Sciatic nerve (tissue), 2 donors: ENCODE measurements at regions of chr6 and their contacts with region 1.

Region 1: DNA sequence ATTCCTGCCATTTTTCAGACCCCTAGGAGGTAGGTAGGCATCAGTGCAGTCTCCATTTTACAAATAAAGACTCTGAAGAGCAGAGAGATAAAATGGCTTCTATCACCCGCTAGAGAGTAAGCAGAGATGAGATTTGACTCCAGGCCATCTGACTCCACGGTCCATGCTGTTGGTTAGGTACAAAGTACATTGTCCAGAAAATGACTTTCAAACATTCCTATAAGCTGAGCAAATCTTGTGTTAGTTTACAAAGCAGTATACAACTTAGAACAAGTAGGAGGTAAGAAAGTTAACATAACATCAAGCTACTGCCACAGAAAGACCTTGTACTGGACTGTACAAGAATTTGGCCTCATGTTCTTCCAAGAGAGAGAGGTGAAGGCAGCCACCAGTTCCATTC is 14.9 kb downstream of the BTN1A1 start:
- DNase-seq: no peak
- ATAC-seq: no peak

Region 2: GRCh38 chr6:26465776-26466175 is 49.2 kb before region 1 on chr6:
- intact Hi-C with region 1: loop called (anchors 2 kb)
- DNase-seq: no peak
- ATAC-seq: no peak

Region 3: DNA sequence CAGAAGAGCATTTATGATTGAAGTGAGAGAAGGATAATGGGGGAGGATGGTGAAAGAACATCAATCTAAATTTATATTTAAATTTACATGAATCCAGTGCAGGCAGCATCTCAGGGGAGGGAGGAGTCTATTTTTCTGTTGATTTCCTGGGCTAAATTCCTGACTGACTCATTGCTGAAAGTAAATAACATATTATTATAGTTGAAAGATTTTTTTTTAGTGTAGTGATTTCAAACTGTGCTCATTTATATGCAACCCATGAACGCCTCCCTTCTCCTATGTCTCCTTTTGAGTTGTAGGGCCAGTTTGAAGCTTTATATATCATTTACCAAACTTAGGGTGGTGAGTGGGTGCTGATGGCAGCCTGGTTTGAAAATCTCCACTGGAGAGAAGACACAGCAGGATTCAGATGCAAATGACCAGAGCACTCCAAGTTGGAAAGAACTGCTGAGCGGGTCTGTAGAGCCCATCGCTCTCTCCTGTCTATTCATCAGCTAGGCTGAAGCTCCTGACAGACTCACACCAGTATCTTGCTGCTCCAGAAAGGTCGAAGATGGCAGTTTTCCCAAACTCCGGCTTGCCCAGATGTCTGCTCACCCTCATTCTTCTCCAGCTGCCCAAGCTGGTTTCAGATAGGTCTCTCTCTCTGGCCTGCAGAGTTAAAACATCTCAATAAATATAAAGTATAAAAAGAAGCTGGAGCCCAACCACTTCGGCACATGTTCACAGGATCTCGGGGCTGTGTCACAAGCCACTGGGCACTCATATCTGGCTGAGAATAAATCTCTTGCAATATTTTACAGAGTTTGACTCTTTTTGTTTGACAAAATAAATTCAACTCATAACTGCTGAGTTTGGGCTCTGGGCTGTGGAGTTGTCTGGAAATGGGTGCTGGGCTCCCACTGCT is 38.9 kb before region 1 on chr6:
- intact Hi-C with region 1: no loop called
- DNase-seq: no peak
- ATAC-seq: no peak

Region 4: GRCh38 chr6:28296520-28297060 is 1781.6 kb after region 1 on chr6:
- intact Hi-C with region 1: no loop called
- DNase-seq: no peak
- ATAC-seq: no peak